ENCODE measurements at regions of chr1 and their contacts with region 1.

Region 1: GRCh38 chr1:28480308-28480707 is 25.5 kb upstream of the RCC1 start:
- DNase-seq: no peak
- ATAC-seq: no peak
- H3K4me3 ChIP-seq: no peak overlapping the region
- H3K27ac ChIP-seq: no peak overlapping the region
- H3K4me1 ChIP-seq: no peaks in the 10 kb centered on the region
- H3K27me3 ChIP-seq: no peaks in the 10 kb centered on the region
- CTCF ChIP-seq: no peak
- POLR2A ChIP-seq: no peak
- RAD21 ChIP-seq: no peak

Region 2: DNA sequence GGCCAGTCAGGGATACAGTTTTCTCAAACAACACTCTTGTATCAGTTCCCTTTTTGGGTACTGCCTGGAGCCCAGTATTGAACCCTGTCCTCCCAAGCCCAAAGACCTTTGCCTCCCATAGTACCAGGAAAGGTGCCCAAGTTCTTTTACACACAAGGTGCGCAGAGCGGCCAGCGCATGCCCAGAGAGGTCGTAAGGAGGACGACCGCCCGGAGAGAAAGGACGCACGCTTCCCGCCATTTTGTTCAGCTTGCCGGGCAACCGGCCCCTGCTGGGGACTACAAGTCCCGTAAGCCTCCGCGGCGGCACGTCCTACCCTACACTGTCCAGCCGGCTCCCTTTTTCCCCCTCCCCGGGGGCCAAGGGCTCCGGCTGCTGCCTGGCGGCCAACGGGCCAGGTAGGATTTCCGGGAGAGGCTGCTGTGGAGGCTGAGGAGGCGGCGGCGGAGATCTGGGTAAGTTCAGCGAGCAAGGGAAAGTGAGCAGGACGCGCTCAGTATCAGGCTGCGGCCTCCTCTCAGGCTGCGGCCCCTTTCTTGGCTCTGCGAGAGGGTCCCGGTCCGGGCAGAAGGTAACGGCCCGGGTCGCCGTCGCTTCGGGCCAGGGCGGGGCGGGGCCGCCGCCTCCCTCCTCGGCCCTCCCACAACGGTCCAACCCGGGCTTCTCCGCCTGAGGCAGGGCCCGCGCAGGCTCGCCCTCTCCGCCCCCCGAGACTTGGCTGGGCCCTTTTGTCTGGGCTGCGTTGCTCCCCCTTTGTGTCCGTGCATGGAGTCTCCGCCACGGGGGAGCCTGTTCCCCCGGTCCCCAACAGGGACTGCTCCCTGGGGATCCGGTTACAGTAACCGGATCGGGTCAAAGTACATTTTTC is 110.7 kb before region 1 on chr1 and contains the start of gene PHACTR4:
- CTCF ChIA-PET with region 1: no interaction called
- POLR2A ChIA-PET with region 1: no interaction called
- dilution Hi-C with region 1: no loop called
- in situ Hi-C with region 1: no loop called
- intact Hi-C with region 1: no loop called
- DNase-seq: peak; percentile 91
- ATAC-seq: peak; percentile 95
- H3K4me3 ChIP-seq: peak within 1 kb of the TSS; percentile 66
- H3K27ac ChIP-seq: peak within 1 kb of the TSS; percentile 93
- H3K4me1 ChIP-seq: 0 out of 2 replicates have a peak, but pooled peaks cover 5% of the 10 kb centered on the region
- H3K27me3 ChIP-seq: no peaks in the 10 kb centered on the region
- CTCF ChIP-seq: no peak
- POLR2A ChIP-seq: peak; percentile 76; the same call in 1 of the 2 replicates
- RAD21 ChIP-seq: no peak
- total RNA-seq, gene PHACTR4: 6.9 and 7.5 TPM in 2 replicates

Region 3: DNA sequence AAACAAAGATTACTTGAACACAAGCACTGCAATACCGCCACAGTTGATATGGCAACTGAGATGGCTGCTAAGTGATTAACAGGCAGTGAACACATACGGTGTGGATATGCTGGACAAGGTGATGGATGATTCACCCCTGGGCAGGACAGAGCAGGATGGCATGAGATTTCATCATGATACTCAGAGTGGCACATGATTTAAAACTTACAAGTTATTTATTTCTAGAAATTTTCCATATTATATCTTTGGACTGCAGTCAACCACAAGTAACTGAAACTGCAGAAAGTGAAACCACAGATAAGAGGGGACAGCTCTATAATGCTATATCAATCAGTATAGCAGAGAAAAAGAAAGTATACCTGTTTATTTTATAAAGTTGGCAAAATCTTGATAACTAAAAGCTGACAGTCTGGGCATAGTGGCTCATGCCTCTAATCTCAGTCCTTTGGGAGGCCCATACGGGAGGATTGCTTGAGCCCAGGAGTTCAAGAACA is 62.8 kb before region 1 on chr1:
- CTCF ChIA-PET with region 1: interaction called, 3 read pairs
- POLR2A ChIA-PET with region 1: no interaction called
- dilution Hi-C with region 1: no loop called
- in situ Hi-C with region 1: no loop called
- intact Hi-C with region 1: loop called (anchors 10 kb)
- DNase-seq: peak; percentile 65
- ATAC-seq: peak; percentile 69
- H3K4me3 ChIP-seq: no peak overlapping the region
- H3K27ac ChIP-seq: no peak overlapping the region
- H3K4me1 ChIP-seq: no peaks in the 10 kb centered on the region
- H3K27me3 ChIP-seq: no peaks in the 10 kb centered on the region
- CTCF ChIP-seq: no peak
- POLR2A ChIP-seq: no peak
- RAD21 ChIP-seq: no peak

Region 4: GRCh38 chr1:28581536-28582247 is 101.4 kb after region 1 on chr1:
- CTCF ChIA-PET with region 1: no interaction called
- POLR2A ChIA-PET with region 1: no interaction called
- dilution Hi-C with region 1: no loop called
- in situ Hi-C with region 1: no loop called
- intact Hi-C with region 1: no loop called
- DNase-seq: peak; percentile 94
- ATAC-seq: peak; percentile 95
- H3K4me3 ChIP-seq: peak overlapping the region; percentile 79
- H3K27ac ChIP-seq: peak overlapping the region; percentile 75
- H3K4me1 ChIP-seq: peaks cover 6% of the 10 kb centered on the region; the same call in 1 of the 2 replicates
- H3K27me3 ChIP-seq: no peaks in the 10 kb centered on the region
- CTCF ChIP-seq: no peak
- POLR2A ChIP-seq: peak; percentile 100
- RAD21 ChIP-seq: no peak; the same call in 1 of the 2 replicates